AG04450 (cell line): ENCODE measurements at regions of chr2 and their contacts with region 1.

Region 1: DNA sequence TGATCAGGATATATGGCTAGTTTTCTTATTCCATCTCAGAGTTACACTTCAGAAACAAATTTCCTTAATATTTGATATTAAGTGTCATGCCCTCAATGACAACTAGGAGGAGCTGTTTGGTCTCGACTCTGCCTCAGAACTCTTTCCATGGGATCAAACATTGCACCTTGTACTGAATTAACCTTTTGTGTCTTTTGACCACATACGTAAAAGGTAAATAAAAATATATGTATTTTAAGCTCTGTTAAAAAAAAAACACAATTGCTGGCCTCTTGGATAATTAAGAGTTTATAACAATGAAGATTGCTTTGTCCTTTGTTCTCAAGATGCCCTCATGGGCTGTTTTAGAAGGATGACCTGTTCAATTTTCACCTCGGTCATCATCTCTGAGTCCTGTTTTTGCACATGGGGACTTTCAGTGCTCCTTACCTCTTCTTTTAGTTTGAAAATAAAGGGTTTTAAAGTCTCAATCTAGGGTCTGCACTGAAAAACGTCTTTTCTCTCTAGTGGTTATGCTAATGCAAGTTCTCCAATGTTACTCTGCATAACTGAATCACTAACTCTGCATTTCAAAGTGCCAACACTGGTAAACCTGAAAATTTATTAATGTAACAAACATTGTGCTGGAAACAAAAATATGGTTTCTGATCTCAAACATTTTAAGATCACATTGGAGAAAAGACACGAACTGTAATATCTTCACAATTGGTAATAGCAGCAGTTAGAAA is 18.8 kb upstream of the FN1 start:
- DNase-seq: no peak
- H3K4me3 ChIP-seq: no peak overlapping the region
- H3K27ac ChIP-seq: no peak overlapping the region
- H3K27me3 ChIP-seq: no peaks in the 10 kb centered on the region
- CTCF ChIP-seq: peak; percentile 78

Region 2: DNA sequence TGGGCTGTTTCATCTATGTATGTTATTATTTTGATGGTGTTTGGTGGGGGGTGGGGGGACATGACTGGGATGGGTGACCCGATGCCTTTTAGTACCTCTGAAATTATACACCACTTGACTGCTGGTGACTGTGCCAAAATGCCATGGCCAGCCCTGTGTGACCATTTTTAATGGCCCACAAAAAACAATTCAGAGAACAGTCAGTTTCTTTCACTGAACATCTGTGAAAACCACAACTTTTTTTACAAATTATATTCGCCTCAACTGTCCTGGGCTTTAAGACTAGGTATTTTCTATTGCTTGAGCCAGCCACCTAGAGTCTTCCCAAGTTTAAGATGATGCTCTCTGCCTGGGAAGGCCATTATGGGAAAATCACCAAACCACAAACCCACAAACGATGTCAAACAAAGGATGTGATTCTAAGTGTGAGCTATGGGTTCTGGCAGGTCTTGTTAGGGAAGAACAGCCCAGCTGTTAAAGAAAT is 52.7 kb before region 1 on chr2:
- CTCF ChIA-PET with region 1: no interaction called
- POLR2A ChIA-PET with region 1: no interaction called
- DNase-seq: peak; percentile 90
- H3K4me3 ChIP-seq: no peak overlapping the region
- H3K27ac ChIP-seq: peak overlapping the region; percentile 54
- H3K27me3 ChIP-seq: no peaks in the 10 kb centered on the region
- CTCF ChIP-seq: no peak

Region 3: DNA sequence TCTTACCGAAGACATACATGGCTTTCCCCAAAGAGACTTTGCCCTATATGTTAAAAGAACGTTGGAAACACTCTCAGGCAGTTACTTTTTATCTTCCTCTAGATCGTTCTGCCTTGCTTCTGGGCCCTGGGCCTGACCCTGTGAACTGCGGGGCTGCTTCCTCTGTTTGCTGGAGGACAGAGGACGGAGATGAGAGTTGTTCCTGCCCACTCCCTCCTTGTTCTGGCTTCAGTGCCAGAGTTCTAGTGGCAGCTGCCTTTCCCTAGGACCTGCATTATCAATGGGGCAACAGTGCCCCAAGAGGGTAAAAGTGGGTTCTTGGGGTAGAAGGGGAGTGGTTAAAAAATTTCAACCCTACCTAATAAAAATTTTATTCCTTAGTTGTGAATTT is 12.3 kb before region 1 on chr2:
- CTCF ChIA-PET with region 1: interaction called, 15 read pairs
- POLR2A ChIA-PET with region 1: no interaction called
- DNase-seq: no peak
- H3K4me3 ChIP-seq: no peak overlapping the region
- H3K27ac ChIP-seq: no peak overlapping the region
- H3K27me3 ChIP-seq: no peaks in the 10 kb centered on the region
- CTCF ChIP-seq: no peak